Activated T-helper 2 cell treated with anti-CD3 and anti-CD28 coated beads, Interferon-gamma antibody, Interleukin-2, Interleukin-4, amounts not matched to agents 10 μg/mL and 5 μg/mL and 100 μg/mL, durations not matched to agents 14 hours and 24 hours and 36 hours (primary cell): ENCODE measurements at regions of chr1 and their contacts with region 1.

Region 1: GRCh38 chr1:116847688-116848531 is 61.8 kb upstream of the PTGFRN start:
- DNase-seq: no peak
- H3K4me3 Mint-ChIP-seq: no peak overlapping the region
- H3K27ac Mint-ChIP-seq: peak overlapping the region; percentile 11
- H3K4me1 Mint-ChIP-seq: peaks cover 22% of the 10 kb centered on the region
- H3K27me3 Mint-ChIP-seq: no peaks in the 10 kb centered on the region

Region 2: GRCh38 chr1:116873680-116874271 is 25.9 kb after region 1 on chr1:
- intact Hi-C with region 1: loop called (anchors 1 kb)
- DNase-seq: no peak
- H3K4me3 Mint-ChIP-seq: peak overlapping the region; percentile 17
- H3K27ac Mint-ChIP-seq: peak overlapping the region; percentile 36
- H3K4me1 Mint-ChIP-seq: peaks cover 25% of the 10 kb centered on the region
- H3K27me3 Mint-ChIP-seq: peaks cover 2% of the 10 kb centered on the region

Region 3: GRCh38 chr1:116909510-116910378 is 61.8 kb after region 1 on chr1 and contains the start of gene PTGFRN:
- intact Hi-C with region 1: no loop called
- DNase-seq: no peak
- H3K4me3 Mint-ChIP-seq: peak within 1 kb of the TSS; percentile 78
- H3K27ac Mint-ChIP-seq: peak within 1 kb of the TSS; percentile 73
- H3K4me1 Mint-ChIP-seq: no peaks in the 10 kb centered on the region
- H3K27me3 Mint-ChIP-seq: peaks cover 8% of the 10 kb centered on the region
- total RNA-seq, gene PTGFRN: 19.1 and 23.2 TPM in 2 replicates